ENCODE measurements at regions of chr11 and their contacts with region 1.

Region 1: GRCh38 chr11:93234602-93235207 is 36.9 kb upstream of the SLC36A4 start:
- DNase-seq: peak; percentile 78
- ATAC-seq: peak; percentile 98
- H3K4me3 Mint-ChIP-seq: no peak overlapping the region
- H3K27ac Mint-ChIP-seq: no peak overlapping the region
- H3K4me1 Mint-ChIP-seq: no peaks in the 10 kb centered on the region
- H3K27me3 Mint-ChIP-seq: peaks cover 23% of the 10 kb centered on the region

Region 2: GRCh38 chr11:93623179-93623578 is 388.5 kb after region 1 on chr11:
- CTCF ChIA-PET with region 1: interaction called, 11 read pairs
- POLR2A ChIA-PET with region 1: no interaction called
- DNase-seq: no peak
- ATAC-seq: no peak
- H3K4me3 Mint-ChIP-seq: no peak overlapping the region
- H3K27ac Mint-ChIP-seq: no peak overlapping the region
- H3K4me1 Mint-ChIP-seq: peaks cover 6% of the 10 kb centered on the region
- H3K27me3 Mint-ChIP-seq: peaks cover 8% of the 10 kb centered on the region

Region 3: GRCh38 chr11:93652161-93652597 is 417.5 kb after region 1 on chr11:
- CTCF ChIA-PET with region 1: interaction called, 27 read pairs
- POLR2A ChIA-PET with region 1: no interaction called
- DNase-seq: peak; percentile 44
- ATAC-seq: no peak
- H3K4me3 Mint-ChIP-seq: no peak overlapping the region
- H3K27ac Mint-ChIP-seq: no peak overlapping the region
- H3K4me1 Mint-ChIP-seq: peaks cover 3% of the 10 kb centered on the region
- H3K27me3 Mint-ChIP-seq: peaks cover 30% of the 10 kb centered on the region

Measured in activated CD8-positive, alpha-beta T cell treated with anti-CD3 and anti-CD28 coated beads, Interleukin-2, amount 10 ng/mL, durations not matched to agents 7 days and 5 days (primary cell).